CD4-positive, alpha-beta T cell (primary cell): ENCODE measurements at regions of chr12 and their contacts with region 1.

Region 1: GRCh38 chr12:48924617-48925303 is 532 bp downstream of the FKBP11 start:
- DNase-seq: peak; percentile 60 to 91 (median 74)
- ATAC-seq: peak; percentile 84
- H3K4me3 ChIP-seq: peak overlapping the region; percentile 100
- H3K4me3 Mint-ChIP-seq: peak overlapping the region; percentile 99
- H3K27ac ChIP-seq: peak overlapping the region; percentile 87 to 91
- H3K27ac Mint-ChIP-seq: peak overlapping the region; percentile 86
- H3K4me1 ChIP-seq: peaks cover 52% of the 10 kb centered on the region
- H3K4me1 Mint-ChIP-seq: peaks cover 63% of the 10 kb centered on the region
- H3K27me3 ChIP-seq: no peaks in the 10 kb centered on the region
- H3K27me3 Mint-ChIP-seq: no peaks in the 10 kb centered on the region
- CTCF ChIP-seq: peak; percentile 75

Region 2: DNA sequence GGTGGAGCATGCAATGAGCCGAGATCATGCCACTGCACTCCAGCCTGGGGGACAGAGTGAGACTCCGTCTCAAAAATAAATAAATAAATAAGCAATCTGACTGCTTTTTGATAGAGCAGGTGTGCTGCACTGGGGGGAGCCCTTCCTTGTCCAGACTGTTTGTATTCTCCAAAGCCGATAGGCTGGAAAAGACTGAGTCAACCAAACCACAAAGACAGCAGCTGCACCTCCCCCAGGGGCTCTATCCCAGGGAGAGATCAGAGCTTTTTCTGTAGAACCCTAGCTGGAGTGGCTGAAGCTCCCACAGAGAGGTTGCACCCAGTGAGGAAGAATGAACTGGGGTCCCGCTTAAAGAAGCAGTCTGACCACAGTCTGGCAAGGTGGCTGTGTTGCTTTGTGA is 309.1 kb before region 1 on chr12:
- CTCF ChIA-PET with region 1: no interaction called
- POLR2A ChIA-PET with region 1: no interaction called
- intact Hi-C with region 1: no loop called
- DNase-seq: no peak
- ATAC-seq: no peak
- H3K4me3 ChIP-seq: no peak overlapping the region
- H3K4me3 Mint-ChIP-seq: no peak overlapping the region
- H3K27ac ChIP-seq: no peak overlapping the region
- H3K27ac Mint-ChIP-seq: no peak overlapping the region
- H3K4me1 ChIP-seq: no peaks in the 10 kb centered on the region
- H3K4me1 Mint-ChIP-seq: no peaks in the 10 kb centered on the region
- H3K27me3 ChIP-seq: peaks cover 0 to 11% of the 10 kb centered on the region in 2 experiments
- H3K27me3 Mint-ChIP-seq: peaks cover 54% of the 10 kb centered on the region
- CTCF ChIP-seq: no peak

Region 3: DNA sequence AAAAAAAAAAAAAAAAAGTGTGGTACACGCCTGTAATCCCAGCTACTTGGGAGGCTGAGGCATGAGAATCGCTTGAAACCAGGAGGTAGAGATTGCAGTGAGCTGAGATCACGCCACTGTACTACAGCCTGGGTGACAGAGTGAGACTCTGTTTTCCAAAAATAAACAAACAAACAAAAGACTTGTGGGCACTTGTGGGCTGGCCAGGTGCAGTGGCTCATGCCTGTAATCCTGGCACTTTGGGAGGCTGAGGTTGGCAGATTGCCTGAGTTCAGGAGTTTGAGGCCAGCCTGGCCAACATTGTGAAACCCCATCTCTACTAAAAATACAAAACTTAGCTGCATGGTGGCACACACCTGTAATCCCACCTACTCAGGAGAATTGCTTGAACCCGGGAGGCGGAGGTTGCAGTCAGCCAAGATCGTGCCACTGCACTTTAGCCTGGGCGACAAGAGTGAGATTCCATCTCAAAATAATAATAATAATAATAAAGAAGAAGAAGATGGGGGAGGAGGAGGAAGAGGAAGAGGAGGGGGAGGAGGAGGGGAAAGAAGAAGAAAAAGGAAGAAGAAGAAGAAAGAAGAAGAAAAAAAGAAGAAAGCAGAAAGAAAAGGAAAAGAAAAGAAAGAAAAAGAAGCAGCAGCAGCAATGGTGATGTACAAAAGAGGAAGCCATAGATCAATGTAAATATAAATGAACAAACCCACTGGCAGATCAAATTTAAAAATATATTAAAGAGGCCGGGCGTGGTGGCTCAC is 180.3 kb before region 1 on chr12:
- CTCF ChIA-PET with region 1: no interaction called
- POLR2A ChIA-PET with region 1: no interaction called
- intact Hi-C with region 1: no loop called
- DNase-seq: no peak
- ATAC-seq: no peak
- H3K4me3 ChIP-seq: no peak overlapping the region
- H3K4me3 Mint-ChIP-seq: no peak overlapping the region
- H3K27ac ChIP-seq: no peak overlapping the region
- H3K27ac Mint-ChIP-seq: no peak overlapping the region
- H3K4me1 ChIP-seq: no peaks in the 10 kb centered on the region
- H3K4me1 Mint-ChIP-seq: no peaks in the 10 kb centered on the region
- H3K27me3 ChIP-seq: peaks cover 7 to 13% of the 10 kb centered on the region in 2 experiments
- H3K27me3 Mint-ChIP-seq: peaks cover 20% of the 10 kb centered on the region
- CTCF ChIP-seq: no peak

Region 4: DNA sequence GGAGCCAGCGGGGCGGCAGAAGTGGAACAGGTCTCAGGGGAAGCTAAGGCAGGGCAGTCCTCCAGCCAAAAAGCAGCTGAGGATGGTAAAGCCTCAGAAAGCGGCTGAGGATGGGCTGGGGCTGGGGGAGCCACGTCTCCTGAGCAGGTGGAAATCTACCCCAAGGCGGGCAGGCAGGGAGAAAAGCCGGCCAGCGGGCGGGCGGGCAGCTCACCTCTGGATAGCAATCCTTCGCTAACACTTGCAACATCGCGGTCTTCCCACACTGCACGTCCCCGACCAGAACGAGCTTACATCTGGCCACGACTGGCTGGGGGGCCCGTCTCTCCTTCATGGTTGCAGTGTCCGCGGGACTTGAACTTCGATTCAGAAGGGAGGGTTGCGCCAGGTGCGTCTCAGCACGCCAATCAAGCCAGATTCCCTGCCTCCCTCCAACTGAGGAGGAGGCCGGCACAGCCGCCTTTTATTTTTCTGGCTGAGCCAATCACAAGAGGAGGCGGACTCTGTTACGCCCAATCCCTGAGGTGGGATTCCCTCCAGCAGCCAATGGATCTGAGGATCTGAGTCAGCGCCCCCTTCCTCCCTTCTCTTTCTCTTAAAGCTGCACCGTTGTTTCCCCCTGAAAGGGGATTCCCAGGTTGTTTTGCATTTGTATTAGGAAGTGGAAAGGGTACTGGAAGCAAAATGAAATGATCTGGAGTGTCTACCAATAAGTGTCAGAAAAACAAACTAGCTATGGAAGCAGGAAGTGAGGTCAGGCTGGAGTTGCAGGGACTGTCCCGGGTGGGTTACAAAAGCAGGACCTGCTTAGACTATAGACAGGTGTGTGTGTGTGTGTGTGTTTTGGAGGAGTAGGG is 59.1 kb before region 1 on chr12 and contains the start of gene RND1:
- CTCF ChIA-PET with region 1: no interaction called
- POLR2A ChIA-PET with region 1: interaction called, 19 read pairs
- intact Hi-C with region 1: no loop called
- DNase-seq: peak; percentile 67 to 95 (median 78)
- ATAC-seq: peak; percentile 96
- H3K4me3 ChIP-seq: peak within 1 kb of the TSS; percentile 71
- H3K4me3 Mint-ChIP-seq: peak within 1 kb of the TSS; percentile 90
- H3K27ac ChIP-seq: peak within 1 kb of the TSS in 1 of 2 donors; percentile 25
- H3K27ac Mint-ChIP-seq: peak within 1 kb of the TSS; percentile 72
- H3K4me1 ChIP-seq: peaks cover 23% of the 10 kb centered on the region
- H3K4me1 Mint-ChIP-seq: peaks cover 28% of the 10 kb centered on the region
- H3K27me3 ChIP-seq: peaks cover 20 to 30% of the 10 kb centered on the region in 2 experiments
- H3K27me3 Mint-ChIP-seq: peaks cover 35% of the 10 kb centered on the region
- CTCF ChIP-seq: no peak
- total RNA-seq, gene RND1: 4.8 to 5.7 TPM

Region 5: GRCh38 chr12:48875944-48876515 is 48.7 kb before region 1 on chr12:
- CTCF ChIA-PET with region 1: no interaction called
- POLR2A ChIA-PET with region 1: no interaction called
- intact Hi-C with region 1: no loop called
- DNase-seq: no peak
- ATAC-seq: no peak
- H3K4me3 ChIP-seq: no peak overlapping the region
- H3K4me3 Mint-ChIP-seq: no peak overlapping the region
- H3K27ac ChIP-seq: no peak overlapping the region
- H3K27ac Mint-ChIP-seq: no peak overlapping the region
- H3K4me1 ChIP-seq: no peaks in the 10 kb centered on the region
- H3K4me1 Mint-ChIP-seq: no peaks in the 10 kb centered on the region
- H3K27me3 ChIP-seq: peaks cover 10 to 13% of the 10 kb centered on the region in 2 experiments
- H3K27me3 Mint-ChIP-seq: peaks cover 12% of the 10 kb centered on the region
- CTCF ChIP-seq: no peak

Region 6: DNA sequence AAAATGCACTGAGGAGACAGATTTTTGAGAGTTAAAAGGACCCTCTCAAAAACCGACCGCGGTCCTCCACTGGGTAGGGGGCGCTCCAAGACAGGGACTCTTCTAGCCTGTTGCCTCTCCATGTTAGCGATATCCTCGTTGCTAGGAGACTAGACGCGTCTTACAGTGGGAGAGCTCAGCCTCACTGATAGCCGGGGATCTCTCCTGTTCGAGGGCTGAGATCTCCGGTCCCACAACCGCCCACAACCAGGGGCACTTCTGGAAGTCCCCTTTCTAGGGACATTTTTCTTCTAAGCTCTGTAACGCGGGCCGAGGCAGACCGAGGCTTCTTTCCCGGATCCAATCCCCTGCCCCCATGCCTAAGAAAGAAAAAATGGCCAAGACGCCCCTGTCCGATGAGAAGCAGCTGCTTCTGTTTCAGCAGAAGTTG is 20.8 kb before region 1 on chr12:
- CTCF ChIA-PET with region 1: interaction called, 4 read pairs
- POLR2A ChIA-PET with region 1: interaction called, 21 read pairs
- intact Hi-C with region 1: loop called in 1 of 2 experiments (anchors 2 kb)
- DNase-seq: peak; percentile 73 to 93 (median 82)
- ATAC-seq: peak; percentile 100
- H3K4me3 ChIP-seq: peak overlapping the region; percentile 37
- H3K4me3 Mint-ChIP-seq: peak overlapping the region; percentile 54
- H3K27ac ChIP-seq: no peak overlapping the region
- H3K27ac Mint-ChIP-seq: no peak overlapping the region
- H3K4me1 ChIP-seq: peaks cover 13% of the 10 kb centered on the region
- H3K4me1 Mint-ChIP-seq: peaks cover 4% of the 10 kb centered on the region
- H3K27me3 ChIP-seq: no peaks in the 10 kb centered on the region
- H3K27me3 Mint-ChIP-seq: peaks cover 5% of the 10 kb centered on the region
- CTCF ChIP-seq: peak; percentile 80

Region 7: DNA sequence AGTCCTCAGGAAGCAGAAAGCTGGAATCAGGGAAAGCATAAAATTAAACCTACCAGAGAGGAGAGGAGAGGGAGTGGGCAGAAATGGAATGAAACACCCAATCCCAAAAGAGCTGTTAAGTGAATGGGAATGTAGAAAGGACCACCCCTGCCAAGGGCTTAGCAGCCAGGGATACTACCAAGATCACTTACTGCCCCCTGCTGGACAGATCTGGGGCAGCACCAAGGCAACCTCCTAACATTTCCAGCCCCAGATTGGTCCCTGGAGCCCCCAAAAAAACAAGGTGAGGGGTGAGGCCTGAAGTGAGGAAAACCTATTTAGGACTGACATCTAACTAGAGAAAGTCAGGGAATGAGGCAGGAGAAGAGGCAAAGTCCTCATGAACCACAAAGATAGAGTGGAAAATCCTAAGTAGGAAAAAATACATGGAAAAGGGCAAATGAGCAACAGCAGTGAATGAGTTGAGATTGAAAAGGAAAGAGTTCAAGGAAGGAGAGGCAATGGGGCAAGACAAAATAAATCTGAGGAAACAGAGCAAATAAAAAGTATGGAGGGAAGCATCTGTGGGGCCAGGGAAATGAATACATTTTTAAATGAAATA is 11.7 kb after region 1 on chr12:
- CTCF ChIA-PET with region 1: interaction called, 25 read pairs
- POLR2A ChIA-PET with region 1: interaction called, 21 read pairs
- intact Hi-C with region 1: loop called (anchors 1 kb)
- DNase-seq: peak; percentile 75 to 90 (median 84)
- ATAC-seq: peak; percentile 60
- H3K4me3 ChIP-seq: no peak overlapping the region
- H3K4me3 Mint-ChIP-seq: no peak overlapping the region
- H3K27ac ChIP-seq: no peak overlapping the region
- H3K27ac Mint-ChIP-seq: peak overlapping the region; percentile 32
- H3K4me1 ChIP-seq: peaks cover 55% of the 10 kb centered on the region
- H3K4me1 Mint-ChIP-seq: peaks cover 32% of the 10 kb centered on the region
- H3K27me3 ChIP-seq: no peaks in the 10 kb centered on the region
- H3K27me3 Mint-ChIP-seq: no peaks in the 10 kb centered on the region
- CTCF ChIP-seq: peak; percentile 94

Region 8: GRCh38 chr12:48957141-48958048 is 32.6 kb after region 1 on chr12 and contains the start of gene ARF3:
- CTCF ChIA-PET with region 1: interaction called, 9 read pairs
- POLR2A ChIA-PET with region 1: interaction called, 13 read pairs
- intact Hi-C with region 1: loop called in 1 of 2 experiments (anchors 1 kb)
- DNase-seq: peak; percentile 84 to 97 (median 92)
- ATAC-seq: peak; percentile 96
- H3K4me3 ChIP-seq: peak within 1 kb of the TSS; percentile 86
- H3K4me3 Mint-ChIP-seq: peak within 1 kb of the TSS; percentile 100
- H3K27ac ChIP-seq: peak within 1 kb of the TSS; percentile 35 to 51
- H3K27ac Mint-ChIP-seq: peak within 1 kb of the TSS; percentile 91
- H3K4me1 ChIP-seq: peaks cover 25% of the 10 kb centered on the region
- H3K4me1 Mint-ChIP-seq: peaks cover 54% of the 10 kb centered on the region
- H3K27me3 ChIP-seq: no peaks in the 10 kb centered on the region
- H3K27me3 Mint-ChIP-seq: peaks cover 6% of the 10 kb centered on the region
- CTCF ChIP-seq: no peak
- total RNA-seq, gene ARF3: 32.0 to 34.6 TPM

Region 9: DNA sequence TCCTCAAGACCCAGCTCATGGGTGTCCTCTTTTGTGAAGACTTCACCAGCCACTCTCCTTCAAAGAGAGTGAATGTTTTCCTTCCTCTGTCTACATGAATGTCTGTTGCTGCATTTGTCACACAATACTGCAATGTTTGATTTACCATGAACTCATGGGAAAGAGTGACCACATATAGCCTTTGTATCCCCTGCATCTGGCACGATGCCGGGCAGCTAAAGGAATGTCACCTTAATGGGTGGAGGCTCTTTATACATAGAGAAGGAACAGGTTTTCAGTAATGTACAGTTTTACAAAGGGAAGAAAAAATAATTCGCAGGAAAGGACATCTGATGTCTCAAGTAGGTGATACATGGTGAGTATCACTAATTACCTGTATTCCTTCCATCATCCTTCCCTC is 930.2 kb after region 1 on chr12:
- CTCF ChIA-PET with region 1: no interaction called
- POLR2A ChIA-PET with region 1: no interaction called
- intact Hi-C with region 1: no loop called
- DNase-seq: no peak
- ATAC-seq: no peak
- H3K4me3 ChIP-seq: no peak overlapping the region
- H3K4me3 Mint-ChIP-seq: no peak overlapping the region
- H3K27ac ChIP-seq: no peak overlapping the region
- H3K27ac Mint-ChIP-seq: no peak overlapping the region
- H3K4me1 ChIP-seq: no peaks in the 10 kb centered on the region
- H3K4me1 Mint-ChIP-seq: no peaks in the 10 kb centered on the region
- H3K27me3 ChIP-seq: no peaks in the 10 kb centered on the region
- H3K27me3 Mint-ChIP-seq: peaks cover 10% of the 10 kb centered on the region
- CTCF ChIP-seq: no peak